Cardiac septum (tissue), 1 donor: ENCODE measurements at regions of chr5 and their contacts with region 1.

Region 1: DNA sequence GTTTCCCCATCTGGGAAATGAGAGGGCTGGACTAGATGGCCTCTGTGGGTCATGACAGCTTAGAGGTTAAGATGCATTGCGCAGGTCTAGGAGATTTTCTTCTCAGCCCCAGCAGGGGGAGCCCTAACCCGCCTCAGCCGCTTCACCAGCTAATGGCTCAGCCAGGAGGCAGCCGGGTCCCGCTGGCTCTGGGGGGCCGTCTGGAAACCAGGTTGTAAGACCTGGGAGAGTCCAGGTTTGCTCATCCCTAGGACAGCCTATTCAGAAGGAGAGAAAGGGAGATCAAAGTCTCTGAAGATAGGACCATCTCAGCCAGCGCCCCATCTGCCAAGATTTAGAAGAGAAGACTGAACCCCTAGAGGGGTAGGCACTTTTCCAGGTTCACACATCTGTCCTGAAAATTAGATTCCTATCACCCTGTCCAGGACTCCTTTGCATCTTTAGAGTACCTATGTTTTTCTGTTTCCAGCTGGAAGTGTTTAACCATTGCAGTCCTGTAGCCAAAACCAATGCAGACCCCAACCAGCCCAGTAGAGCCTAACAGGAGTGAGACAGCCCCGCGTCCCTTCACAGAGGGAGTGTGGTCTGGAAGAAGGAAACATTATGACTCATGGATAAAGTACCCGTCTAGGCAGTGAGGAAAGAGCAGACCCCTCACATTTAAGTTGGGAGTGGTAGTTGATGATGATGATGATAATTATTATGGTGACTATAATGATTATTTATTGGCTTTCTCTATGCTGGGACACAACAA is 27.5 kb downstream of the SPARC start:
- DNase-seq: peak; percentile 92

Region 2: GRCh38 chr5:151612689-151613427 is 46.3 kb before region 1 on chr5:
- intact Hi-C with region 1: no loop called
- DNase-seq: peak; percentile 17

Region 3: GRCh38 chr5:151699071-151699901 is 40.1 kb after region 1 on chr5:
- intact Hi-C with region 1: loop called (anchors 1 kb)
- DNase-seq: peak; percentile 84

Region 4: DNA sequence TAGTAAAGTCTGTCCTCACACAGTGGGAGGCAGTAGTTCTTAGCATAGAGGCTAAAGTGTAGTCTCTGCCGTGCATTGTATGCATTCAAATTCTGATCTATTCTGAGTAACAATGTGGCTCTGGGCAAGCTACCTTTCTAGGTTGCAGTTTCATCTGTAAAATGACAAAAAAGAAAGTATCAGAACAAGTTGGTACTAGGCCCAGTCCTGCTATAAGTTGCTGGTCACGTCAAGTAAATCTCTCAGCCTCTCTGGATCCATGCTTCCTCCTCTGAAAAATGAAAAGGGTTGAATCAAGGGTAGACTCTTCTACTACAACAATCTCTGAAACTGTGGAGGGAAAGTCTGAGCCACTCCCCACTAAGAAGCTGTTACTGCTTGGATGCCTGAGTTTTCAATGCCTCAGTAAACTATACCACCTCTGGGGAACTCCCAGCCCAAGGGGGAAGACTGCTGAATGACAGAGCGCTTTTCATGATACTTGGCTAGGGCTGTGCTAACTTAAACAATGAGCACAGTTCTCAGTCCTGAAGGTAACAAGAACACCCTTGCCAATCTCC is 62.0 kb after region 1 on chr5:
- intact Hi-C with region 1: loop called (anchors 2 kb)
- DNase-seq: no peak

Region 5: GRCh38 chr5:151740336-151740942 is 81.3 kb after region 1 on chr5:
- intact Hi-C with region 1: loop called (anchors 1 kb)
- DNase-seq: no peak

Region 6: GRCh38 chr5:151847871-151848270 is 188.7 kb after region 1 on chr5:
- intact Hi-C with region 1: no loop called
- DNase-seq: no peak

Region 7: DNA sequence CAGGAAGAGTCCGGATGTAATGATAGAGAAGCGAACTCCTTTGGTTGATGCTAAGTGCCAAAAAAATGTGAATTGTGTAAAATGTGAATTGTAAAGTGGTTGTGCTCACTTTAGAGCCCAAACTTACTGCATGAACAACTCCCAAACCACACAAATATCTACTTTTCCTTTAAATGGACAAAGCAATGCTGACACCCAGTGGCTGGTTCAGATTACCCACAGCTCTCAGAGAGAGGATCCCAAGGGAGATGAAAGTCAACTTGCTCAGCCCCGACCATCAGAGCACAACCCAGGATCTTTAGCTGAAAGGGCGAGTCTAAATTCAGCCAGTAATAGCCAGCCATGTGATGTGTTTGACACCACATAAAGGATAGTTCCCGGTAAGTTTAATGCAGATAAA is 612.2 kb after region 1 on chr5:
- intact Hi-C with region 1: loop called (anchors 5 kb)
- DNase-seq: no peak